ENCODE measurements at regions of chr1 and their contacts with region 1.

Region 1: GRCh38 chr1:191993549-191993948 is 164.7 kb upstream of the RGS18 start:
- DNase-seq: no peak
- ATAC-seq: no peak
- H3K4me3 ChIP-seq: no peak overlapping the region
- H3K4me3 Mint-ChIP-seq: no peak overlapping the region
- H3K27ac ChIP-seq: no peak overlapping the region
- H3K27ac Mint-ChIP-seq: no peak overlapping the region
- H3K4me1 ChIP-seq: no peaks in the 10 kb centered on the region
- H3K4me1 Mint-ChIP-seq: no peaks in the 10 kb centered on the region
- H3K27me3 ChIP-seq: no peaks in the 10 kb centered on the region
- H3K27me3 Mint-ChIP-seq: no peaks in the 10 kb centered on the region
- CTCF ChIP-seq: no peak

Region 2: GRCh38 chr1:191938701-191939100 is 54.8 kb before region 1 on chr1:
- CTCF ChIA-PET with region 1: no interaction called
- POLR2A ChIA-PET with region 1: no interaction called
- intact Hi-C with region 1: loop called in 1 of 2 experiments (anchors 1 kb)
- DNase-seq: no peak
- ATAC-seq: no peak
- H3K4me3 ChIP-seq: no peak overlapping the region
- H3K4me3 Mint-ChIP-seq: no peak overlapping the region
- H3K27ac ChIP-seq: no peak overlapping the region
- H3K27ac Mint-ChIP-seq: no peak overlapping the region
- H3K4me1 ChIP-seq: no peaks in the 10 kb centered on the region
- H3K4me1 Mint-ChIP-seq: no peaks in the 10 kb centered on the region
- H3K27me3 ChIP-seq: no peaks in the 10 kb centered on the region
- H3K27me3 Mint-ChIP-seq: no peaks in the 10 kb centered on the region
- CTCF ChIP-seq: no peak

Measured in CD4-positive, alpha-beta T cell (primary cell).